Breast epithelium (tissue), 4 donors: ENCODE measurements at regions of chr14 and their contacts with region 1.

Region 1: GRCh38 chr14:31194095-31194494 is 13.5 kb downstream of the HECTD1 start:
- DNase-seq: no peak
- H3K4me3 ChIP-seq: no peak overlapping the region
- H3K27ac ChIP-seq: no peak overlapping the region
- H3K4me1 ChIP-seq: peaks cover 0 to 5% of the 10 kb centered on the region in 2 donors
- H3K27me3 ChIP-seq: no peaks in the 10 kb centered on the region
- CTCF ChIP-seq: no peak
- POLR2A ChIP-seq: no peak

Region 2: DNA sequence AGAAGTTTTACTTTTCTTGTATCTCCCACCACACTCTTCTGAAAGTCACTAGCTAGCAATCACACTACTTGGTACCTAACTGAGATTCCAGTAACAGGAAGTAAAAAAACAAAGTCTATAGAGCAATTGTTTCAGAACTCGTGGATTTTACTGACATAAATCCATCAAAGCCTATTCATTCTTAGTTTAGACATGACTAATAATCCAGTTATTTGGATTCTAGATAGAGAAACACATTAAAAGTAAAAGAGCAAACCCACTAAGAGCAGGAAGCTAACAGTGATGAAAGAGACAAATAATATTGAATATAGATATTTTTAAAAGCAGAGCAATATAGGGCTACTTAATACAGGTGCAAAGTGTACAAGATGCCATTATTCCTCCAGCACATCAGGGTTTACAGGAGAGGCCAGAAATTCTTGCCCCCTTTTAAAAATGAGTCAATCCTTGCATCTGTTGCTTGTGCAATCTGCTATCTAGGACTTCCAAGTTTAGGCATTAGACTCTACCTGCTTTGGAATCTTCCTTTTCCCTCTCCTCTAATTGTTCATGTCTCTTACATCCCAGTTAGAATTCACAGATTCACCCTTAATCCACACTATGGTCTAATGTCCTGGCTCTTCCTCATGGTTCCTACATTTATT is 220.2 kb after region 1 on chr14:
- intact Hi-C with region 1: loop called (anchors 5 kb)
- DNase-seq: no peak
- H3K4me3 ChIP-seq: no peak overlapping the region
- H3K27ac ChIP-seq: no peak overlapping the region
- H3K4me1 ChIP-seq: peaks cover 0 to 13% of the 10 kb centered on the region in 2 donors
- H3K27me3 ChIP-seq: no peaks in the 10 kb centered on the region
- CTCF ChIP-seq: no peak
- POLR2A ChIP-seq: no peak